Common myeloid progenitor, CD34-positive (primary cell): ENCODE measurements at regions of chr14 and their contacts with region 1.

Region 1: DNA sequence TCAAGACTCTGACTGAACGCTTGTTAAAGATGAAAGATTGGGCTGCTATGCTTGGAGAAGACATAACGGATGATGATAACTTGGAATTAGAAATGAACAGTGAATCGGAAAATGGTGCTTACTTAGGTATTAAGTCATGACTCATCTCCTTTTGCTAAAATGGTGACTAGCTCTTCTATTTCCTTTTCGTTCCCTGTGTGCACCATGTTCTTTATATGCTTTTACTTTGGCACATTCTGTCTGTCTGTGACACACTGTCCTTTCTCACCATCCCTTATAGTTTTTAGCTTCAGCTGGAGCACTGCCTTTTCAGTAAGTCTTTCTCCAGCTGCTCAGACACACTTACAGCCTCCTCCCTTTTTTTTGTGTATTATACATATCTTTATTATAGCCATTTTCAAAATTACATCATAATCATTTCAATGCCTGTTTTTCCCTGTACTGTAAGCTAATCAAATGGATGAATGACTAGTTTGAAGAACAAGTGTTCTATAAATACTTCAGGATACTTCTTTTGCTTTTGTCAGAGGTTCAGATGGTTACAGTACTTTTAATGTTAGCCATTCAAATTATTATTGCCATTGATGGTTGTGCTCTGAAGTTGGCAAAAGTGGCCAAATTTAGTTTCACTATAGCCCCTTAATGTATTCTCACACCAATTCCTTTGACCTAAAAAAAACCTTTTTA is 68.6 kb downstream of the MIA2 start:
- DNase-seq: no peak
- H3K4me3 ChIP-seq: no peak overlapping the region
- H3K27ac ChIP-seq: no peak overlapping the region
- H3K4me1 ChIP-seq: no peaks in the 10 kb centered on the region
- H3K27me3 ChIP-seq: no peaks in the 10 kb centered on the region

Region 2: DNA sequence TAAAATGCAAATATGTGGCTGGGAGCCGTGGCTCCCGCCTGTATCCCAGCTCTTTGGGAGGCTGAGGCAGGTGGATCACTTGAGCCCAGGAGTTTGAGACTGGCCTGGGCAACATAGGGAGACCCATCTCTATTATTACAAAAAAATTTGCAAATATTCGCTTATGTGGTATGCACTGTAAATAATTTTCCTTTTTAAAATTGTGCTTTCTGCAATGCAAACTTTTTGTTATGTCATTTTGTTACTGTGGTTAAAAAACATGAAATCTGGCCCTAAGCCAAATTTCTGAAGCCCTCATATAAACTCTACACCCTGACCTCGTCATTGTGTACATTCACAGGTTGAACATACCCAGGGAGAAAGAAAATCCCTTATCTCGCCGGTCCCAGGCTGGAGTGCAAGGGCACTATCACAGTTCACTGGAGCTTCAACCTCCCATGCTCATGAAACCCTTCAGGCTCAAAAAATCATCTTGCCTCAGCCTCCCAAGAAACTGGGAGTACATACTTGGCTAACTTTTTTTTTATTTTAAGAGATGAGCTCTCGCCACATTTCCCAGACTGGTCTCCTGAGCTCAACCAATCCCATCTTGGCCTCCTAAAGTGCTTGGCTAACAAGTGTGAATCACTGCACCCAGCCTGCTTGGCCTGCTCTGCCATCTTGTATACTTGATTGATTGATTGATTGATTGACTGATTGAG is 156.9 kb before region 1 on chr14:
- CTCF ChIA-PET with region 1: no interaction called
- POLR2A ChIA-PET with region 1: interaction called, 10 read pairs
- DNase-seq: peak; percentile 37 to 80 (median 60)
- H3K4me3 ChIP-seq: no peak overlapping the region
- H3K27ac ChIP-seq: no peak overlapping the region
- H3K4me1 ChIP-seq: no peaks in the 10 kb centered on the region
- H3K27me3 ChIP-seq: no peaks in the 10 kb centered on the region

Region 3: GRCh38 chr14:39432179-39432618 is 129.9 kb after region 1 on chr14 and contains the start of gene FBXO33:
- CTCF ChIA-PET with region 1: no interaction called
- POLR2A ChIA-PET with region 1: no interaction called
- DNase-seq: peak; percentile 97 to 98 (median 98)
- H3K4me3 ChIP-seq: peak within 1 kb of the TSS; percentile 90 to 99 (median 98)
- H3K27ac ChIP-seq: peak within 1 kb of the TSS; percentile 100
- H3K4me1 ChIP-seq: peaks cover 18 to 39% (median 31%) of the 10 kb centered on the region in 4 experiments
- H3K27me3 ChIP-seq: no peaks in the 10 kb centered on the region

Region 4: DNA sequence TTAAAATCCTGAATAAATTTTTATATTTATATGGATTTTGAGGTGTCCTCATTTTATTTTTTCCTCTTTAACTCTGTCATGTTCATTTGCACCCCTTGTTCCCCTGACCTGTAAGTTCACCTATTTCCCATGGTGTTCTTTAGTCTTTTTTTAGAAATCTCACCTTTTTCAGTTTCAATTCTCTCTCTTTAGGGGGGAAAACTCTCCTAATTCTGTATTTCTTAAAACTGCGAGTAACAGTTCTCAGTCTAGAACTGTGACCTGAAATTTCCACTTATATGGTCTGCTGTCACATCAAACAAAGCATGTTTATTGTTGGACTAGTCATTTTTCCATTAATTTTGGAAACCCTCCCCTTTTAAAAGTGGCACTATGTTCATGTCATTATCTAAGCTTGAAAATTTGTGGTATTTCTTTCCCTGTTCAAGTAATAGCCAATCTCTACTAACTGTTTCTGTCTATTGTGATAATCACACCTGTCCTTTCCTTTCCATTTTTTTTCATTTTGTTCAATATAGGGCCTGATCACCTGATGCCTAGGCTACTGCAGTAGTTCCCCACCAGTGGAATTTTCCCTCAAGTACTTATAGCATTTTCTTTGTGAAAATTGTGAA is 144.0 kb after region 1 on chr14:
- CTCF ChIA-PET with region 1: no interaction called
- POLR2A ChIA-PET with region 1: no interaction called
- DNase-seq: no peak
- H3K4me3 ChIP-seq: no peak overlapping the region
- H3K27ac ChIP-seq: no peak overlapping the region
- H3K4me1 ChIP-seq: no peaks in the 10 kb centered on the region
- H3K27me3 ChIP-seq: no peaks in the 10 kb centered on the region